K562 (cell line): ENCODE measurements at regions of chr6 and their contacts with region 1.

Region 1: DNA sequence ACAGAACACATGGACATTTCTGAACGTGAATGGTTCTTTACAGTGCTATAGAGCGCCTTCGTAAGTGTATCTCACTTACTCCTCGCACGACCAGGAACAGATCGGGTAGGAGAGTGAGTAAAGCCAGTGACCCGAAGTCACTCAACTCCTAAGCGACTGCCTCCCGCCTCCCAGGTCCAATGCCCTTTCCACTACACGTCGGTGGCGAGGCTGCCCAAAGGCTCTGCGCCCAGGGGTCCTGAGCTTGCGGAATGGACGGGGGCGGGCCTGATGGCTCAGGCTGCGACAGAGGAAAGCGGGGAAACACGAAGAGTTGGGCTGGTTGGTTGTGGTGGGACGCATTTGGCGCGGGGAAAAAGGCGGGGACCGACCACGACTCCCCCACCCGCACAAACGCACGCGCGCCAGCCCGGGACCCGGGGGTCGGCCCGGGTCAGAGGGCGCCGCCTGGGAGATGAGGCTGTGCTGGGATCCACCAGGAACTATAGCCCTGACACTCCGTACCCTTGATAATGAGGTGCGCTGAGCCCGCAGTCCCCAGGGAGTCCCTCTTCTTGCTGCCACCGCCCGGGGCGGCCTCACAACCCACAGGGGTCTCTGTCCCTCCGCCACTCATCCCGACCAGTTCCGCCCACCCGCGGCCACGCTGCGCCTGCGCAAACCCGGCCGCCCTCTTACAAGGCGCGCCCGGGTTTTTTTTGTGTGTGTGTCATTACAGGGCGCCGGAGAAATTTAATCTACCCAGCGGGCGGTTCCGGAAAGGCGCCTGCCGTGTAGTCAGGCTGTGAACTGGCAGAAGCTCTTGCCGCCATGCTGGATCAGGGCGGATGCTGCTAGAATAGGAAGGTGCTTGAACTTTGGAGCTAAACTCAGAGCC is at the start of gene BLOC1S5:
- DNase-seq: peak; percentile 95 to 99 (median 96)
- ATAC-seq: peak; percentile 96
- H3K4me3 ChIP-seq: peak within 1 kb of the TSS; percentile 78
- H3K27ac ChIP-seq: peak within 1 kb of the TSS; percentile 81
- H3K4me1 ChIP-seq: peaks cover 7 to 13% of the 10 kb centered on the region in 2 experiments
- H3K27me3 ChIP-seq: no peaks in the 10 kb centered on the region; a peak in 1 of 5 replicates
- CTCF ChIP-seq: peak; percentile 20 to 23 (median 20); a peak in 2 of 6 replicates
- EP300 ChIP-seq: peak; percentile 27; the same call in 1 of the 2 replicates
- POLR2A ChIP-seq: peak; percentile 96
- RAD21 ChIP-seq: peak in 1 of 2 experiments; percentile 15; a peak in 2 of 4 replicates
- polyA plus RNA-seq, gene BLOC1S5: 8.5 to 13.1 TPM

Region 2: GRCh38 chr6:7899101-7899888 is 164.7 kb before region 1 on chr6:
- CTCF ChIA-PET with region 1: no interaction called
- POLR2A ChIA-PET with region 1: no interaction called
- in situ Hi-C with region 1: no loop called
- intact Hi-C with region 1: loop called (anchors 5 kb)
- DNase-seq: peak; percentile 42 to 83 (median 66)
- ATAC-seq: peak; percentile 87
- H3K4me3 ChIP-seq: no peak overlapping the region
- H3K27ac ChIP-seq: peak overlapping the region; percentile 66; the same call in 2 of the 3 replicates
- H3K4me1 ChIP-seq: peaks cover 5 to 34% of the 10 kb centered on the region in 2 experiments
- H3K27me3 ChIP-seq: no peaks in the 10 kb centered on the region
- CTCF ChIP-seq: peak; percentile 53 to 79 (median 56); a peak in 5 of 6 replicates
- EP300 ChIP-seq: peak; percentile 97
- POLR2A ChIP-seq: no peak
- RAD21 ChIP-seq: peak; percentile 89 to 93

Region 3: GRCh38 chr6:7910654-7911344 is 153.2 kb before region 1 on chr6 and contains the start of gene TXNDC5:
- CTCF ChIA-PET with region 1: no interaction called
- POLR2A ChIA-PET with region 1: interaction called, 3 read pairs
- in situ Hi-C with region 1: no loop called
- intact Hi-C with region 1: loop called (anchors 5 kb)
- DNase-seq: peak; percentile 87 to 97 (median 95)
- ATAC-seq: peak; percentile 89
- H3K4me3 ChIP-seq: peak within 1 kb of the TSS; percentile 75
- H3K27ac ChIP-seq: peak within 1 kb of the TSS; percentile 77
- H3K4me1 ChIP-seq: peaks cover 28 to 56% of the 10 kb centered on the region in 2 experiments
- H3K27me3 ChIP-seq: peaks cover 8 to 24% of the 10 kb centered on the region in 2 experiments; a peak in 3 of 5 replicates
- CTCF ChIP-seq: no peak
- EP300 ChIP-seq: no peak
- POLR2A ChIP-seq: peak; percentile 53; the same call in 1 of the 2 replicates
- RAD21 ChIP-seq: peak in 1 of 2 experiments; percentile 9; a peak in 1 of 4 replicates
- polyA plus RNA-seq, gene TXNDC5: 33.9 to 44.0 TPM

Region 4: GRCh38 chr6:8075704-8076103 is 11.7 kb after region 1 on chr6:
- CTCF ChIA-PET with region 1: no interaction called
- POLR2A ChIA-PET with region 1: interaction called, 12 read pairs
- in situ Hi-C with region 1: no loop called
- intact Hi-C with region 1: no loop called
- DNase-seq: no peak
- ATAC-seq: no peak
- H3K4me3 ChIP-seq: no peak overlapping the region
- H3K27ac ChIP-seq: no peak overlapping the region
- H3K4me1 ChIP-seq: peaks cover 0 to under 1% of the 10 kb centered on the region in 2 experiments; a peak in 2 of 5 replicates
- H3K27me3 ChIP-seq: 0 out of 5 replicates have a peak, but pooled peaks cover 0 to under 1% of the 10 kb centered on the region in 2 experiments
- CTCF ChIP-seq: no peak
- EP300 ChIP-seq: no peak
- POLR2A ChIP-seq: no peak
- RAD21 ChIP-seq: no peak

Region 5: DNA sequence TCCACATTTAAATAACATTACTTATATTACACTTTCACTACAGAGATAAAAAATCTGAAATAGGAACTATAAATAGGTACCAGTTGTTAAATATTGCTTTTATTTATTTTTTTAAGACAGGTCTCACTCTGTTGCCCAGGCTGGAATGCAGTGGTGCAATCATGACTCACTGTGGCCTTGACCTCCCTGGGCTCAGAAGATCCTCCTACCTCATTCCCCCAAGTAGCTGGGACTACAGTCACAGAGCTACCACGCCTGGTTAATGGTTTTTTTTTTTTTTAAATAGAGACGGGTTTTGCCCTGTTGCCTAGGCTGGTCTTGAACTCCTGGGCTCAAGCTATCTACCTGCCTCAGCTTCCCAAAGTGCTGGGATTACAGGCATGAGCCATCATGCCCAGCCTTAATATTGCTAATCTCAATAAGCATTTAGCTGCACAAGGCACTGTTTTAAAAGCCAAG is 21.1 kb after region 1 on chr6:
- CTCF ChIA-PET with region 1: no interaction called
- POLR2A ChIA-PET with region 1: interaction called, 11 read pairs
- in situ Hi-C with region 1: no loop called
- intact Hi-C with region 1: no loop called
- DNase-seq: peak in 1 of 4 experiments; percentile 77
- ATAC-seq: peak; percentile 90
- H3K4me3 ChIP-seq: no peak overlapping the region
- H3K27ac ChIP-seq: peak overlapping the region; percentile 47; the same call in 1 of the 3 replicates
- H3K4me1 ChIP-seq: peaks cover 0 to 23% of the 10 kb centered on the region in 2 experiments; a peak in 4 of 5 replicates
- H3K27me3 ChIP-seq: no peaks in the 10 kb centered on the region
- CTCF ChIP-seq: no peak
- EP300 ChIP-seq: peak; percentile 38; the same call in 1 of the 2 replicates
- POLR2A ChIP-seq: no peak
- RAD21 ChIP-seq: no peak

Region 6: DNA sequence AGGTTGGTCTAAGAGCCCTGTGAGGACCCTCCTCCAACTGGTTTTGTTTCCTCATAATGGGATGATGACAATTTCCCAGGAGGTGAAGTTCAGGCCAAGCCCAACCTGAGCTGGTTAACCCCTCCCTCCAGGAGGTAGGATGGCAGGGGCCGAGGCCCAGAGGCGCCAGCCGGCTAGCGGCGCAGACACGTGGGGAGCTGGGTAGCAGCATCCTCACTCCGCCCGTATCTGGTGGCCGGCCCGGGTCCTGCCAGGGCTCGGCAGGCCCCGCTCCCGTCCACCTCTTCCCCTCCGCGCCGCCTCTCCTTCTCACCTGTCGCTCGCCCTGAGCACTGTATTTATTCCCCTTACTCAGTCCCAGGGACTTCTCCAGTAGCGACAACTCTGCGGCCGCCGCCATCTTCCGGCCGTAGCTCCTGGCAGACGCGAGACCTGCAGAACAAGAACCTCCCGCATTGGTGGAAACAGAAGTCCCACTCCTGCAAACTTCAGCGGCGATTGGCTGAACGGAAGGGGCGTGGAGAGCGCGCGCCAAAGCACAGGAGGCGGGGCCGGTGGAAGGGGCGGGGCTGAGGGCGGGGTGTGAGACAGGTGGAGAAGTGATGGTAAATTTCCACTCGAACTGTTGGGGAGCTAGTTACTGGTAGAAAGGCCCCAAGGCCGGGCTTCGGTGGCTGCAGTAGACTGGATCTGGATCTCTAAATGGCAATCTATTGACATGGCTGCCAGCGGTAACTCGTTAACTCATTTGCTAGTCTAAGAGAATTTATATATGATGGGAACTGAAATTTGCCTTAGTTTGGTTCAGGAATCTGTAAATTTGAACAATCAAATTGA is 38.3 kb after region 1 on chr6 and contains the start of gene EEF1E1:
- CTCF ChIA-PET with region 1: no interaction called
- POLR2A ChIA-PET with region 1: no interaction called
- in situ Hi-C with region 1: no loop called
- intact Hi-C with region 1: loop called (anchors 2 kb)
- DNase-seq: peak; percentile 99
- ATAC-seq: peak; percentile 91
- H3K4me3 ChIP-seq: peak within 1 kb of the TSS; percentile 81
- H3K27ac ChIP-seq: peak within 1 kb of the TSS; percentile 85
- H3K4me1 ChIP-seq: peaks cover 5 to 18% of the 10 kb centered on the region in 2 experiments; a peak in 3 of 5 replicates
- H3K27me3 ChIP-seq: no peaks in the 10 kb centered on the region
- CTCF ChIP-seq: no peak
- EP300 ChIP-seq: peak; percentile 34; the same call in 1 of the 2 replicates
- POLR2A ChIP-seq: peak; percentile 96
- RAD21 ChIP-seq: no peak
- polyA plus RNA-seq, gene EEF1E1: 1,212 to 1,355 TPM

Region 7: GRCh38 chr6:8219352-8219943 is 155.4 kb after region 1 on chr6:
- CTCF ChIA-PET with region 1: no interaction called
- POLR2A ChIA-PET with region 1: no interaction called
- in situ Hi-C with region 1: no loop called
- intact Hi-C with region 1: loop called (anchors 5 kb)
- DNase-seq: peak; percentile 61 to 71 (median 62)
- ATAC-seq: peak; percentile 95
- H3K4me3 ChIP-seq: no peak overlapping the region
- H3K27ac ChIP-seq: no peak overlapping the region
- H3K4me1 ChIP-seq: no peaks in the 10 kb centered on the region
- H3K27me3 ChIP-seq: peaks cover 0 to 10% of the 10 kb centered on the region in 2 experiments; a peak in 2 of 5 replicates
- CTCF ChIP-seq: peak; percentile 69 to 84 (median 69); a peak in 5 of 6 replicates
- EP300 ChIP-seq: no peak
- POLR2A ChIP-seq: no peak
- RAD21 ChIP-seq: peak; percentile 88 to 90